CD4-positive, alpha-beta memory T cell (primary cell): ENCODE measurements at regions of chr6 and their contacts with region 1.

Region 1: GRCh38 chr6:7389451-7390225 is at the starts of genes CAGE1 and RIOK1:
- DNase-seq: peak; percentile 94 to 96 (median 96)
- H3K4me3 ChIP-seq: peak within 1 kb of the TSS; percentile 91 to 99
- H3K4me3 Mint-ChIP-seq: peak within 1 kb of the TSS; percentile 92 to 97 (median 94)
- H3K27ac ChIP-seq: peak within 1 kb of the TSS; percentile 94
- H3K27ac Mint-ChIP-seq: peak within 1 kb of the TSS; percentile 97 to 100 (median 100)
- H3K4me1 ChIP-seq: peaks cover 30% of the 10 kb centered on the region
- H3K4me1 Mint-ChIP-seq: peaks cover 32 to 51% (median 42%) of the 10 kb centered on the region in 4 donors
- H3K27me3 ChIP-seq: no peaks in the 10 kb centered on the region
- H3K27me3 Mint-ChIP-seq: no peaks in the 10 kb centered on the region
- total RNA-seq, gene CAGE1: 0.17 to 0.33 TPM
- total RNA-seq, gene RIOK1: 22.4 to 26.1 TPM

Region 2: GRCh38 chr6:6085928-6086668 is 1303.5 kb before region 1 on chr6:
- CTCF ChIA-PET with region 1: no interaction called
- POLR2A ChIA-PET with region 1: no interaction called
- intact Hi-C with region 1: no loop called
- DNase-seq: no peak
- H3K4me3 ChIP-seq: no peak overlapping the region
- H3K4me3 Mint-ChIP-seq: no peak overlapping the region
- H3K27ac ChIP-seq: no peak overlapping the region
- H3K27ac Mint-ChIP-seq: no peak overlapping the region
- H3K4me1 ChIP-seq: no peaks in the 10 kb centered on the region
- H3K4me1 Mint-ChIP-seq: no peaks in the 10 kb centered on the region
- H3K27me3 ChIP-seq: no peaks in the 10 kb centered on the region
- H3K27me3 Mint-ChIP-seq: peaks cover 6 to 14% of the 10 kb centered on the region in 2 donors

Region 3: GRCh38 chr6:7282097-7282906 is 107.3 kb before region 1 on chr6:
- CTCF ChIA-PET with region 1: interaction called, 27 read pairs
- POLR2A ChIA-PET with region 1: no interaction called
- intact Hi-C with region 1: loop called (anchors 2 kb)
- DNase-seq: no peak
- H3K4me3 ChIP-seq: no peak overlapping the region
- H3K4me3 Mint-ChIP-seq: peak overlapping the region; percentile 1 to 71 (median 44)
- H3K27ac ChIP-seq: peak overlapping the region; percentile 8
- H3K27ac Mint-ChIP-seq: peak overlapping the region; percentile 45 to 89 (median 81)
- H3K4me1 ChIP-seq: peaks cover 11% of the 10 kb centered on the region
- H3K4me1 Mint-ChIP-seq: peaks cover 14 to 18% (median 16%) of the 10 kb centered on the region in 4 donors
- H3K27me3 ChIP-seq: no peaks in the 10 kb centered on the region
- H3K27me3 Mint-ChIP-seq: no peaks in the 10 kb centered on the region

Region 4: DNA sequence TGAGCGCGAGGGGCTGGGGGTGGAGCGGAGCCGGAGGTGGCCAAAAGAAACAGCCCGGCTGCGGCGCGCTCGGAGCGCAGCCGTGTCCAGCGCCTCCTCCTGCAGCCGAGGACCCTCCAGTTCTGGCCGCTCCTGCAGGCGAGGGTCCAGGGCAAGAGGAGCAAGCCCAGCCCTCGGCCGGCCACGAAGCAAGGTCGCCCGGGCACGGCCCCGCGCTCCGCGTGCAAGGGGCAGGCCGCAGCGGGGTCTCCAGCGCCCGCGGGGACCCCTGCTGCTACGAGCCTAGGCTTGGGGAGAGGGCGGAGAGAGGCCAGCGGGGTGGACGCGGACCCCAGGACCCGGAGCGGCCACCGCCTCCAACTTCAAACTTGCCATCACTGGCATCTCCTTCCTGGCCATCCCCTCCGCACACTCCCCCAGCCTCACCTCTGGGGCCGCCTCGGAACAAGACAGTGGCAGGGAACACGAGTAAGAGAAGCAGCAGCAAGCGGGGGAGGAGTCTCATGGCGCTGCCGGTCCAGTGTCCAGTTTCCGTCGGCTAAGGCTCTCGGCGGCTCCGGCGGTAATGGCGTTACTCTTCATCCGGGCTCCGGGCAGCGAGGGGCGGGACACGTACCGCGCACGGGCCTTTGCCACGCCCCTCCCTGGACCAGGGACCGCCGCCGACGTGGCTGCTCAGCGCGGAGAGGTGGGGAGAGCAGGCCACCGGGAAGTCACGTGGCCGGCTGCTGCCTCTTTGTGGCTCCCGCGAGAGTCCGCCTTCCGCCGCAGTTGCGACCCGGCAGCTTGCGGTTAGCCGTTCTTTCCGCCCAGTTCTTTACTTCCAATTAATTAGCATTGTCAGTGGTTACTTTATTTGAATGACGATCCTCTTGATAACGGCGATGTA is 76.8 kb before region 1 on chr6 and contains the start of gene SSR1:
- CTCF ChIA-PET with region 1: interaction called, 6 read pairs
- POLR2A ChIA-PET with region 1: interaction called, 37 read pairs
- intact Hi-C with region 1: loop called (anchors 1 kb)
- DNase-seq: peak; percentile 89 to 93 (median 91)
- H3K4me3 ChIP-seq: peak within 1 kb of the TSS; percentile 95 to 97
- H3K4me3 Mint-ChIP-seq: peak within 1 kb of the TSS; percentile 91 to 100 (median 96)
- H3K27ac ChIP-seq: peak within 1 kb of the TSS; percentile 77
- H3K27ac Mint-ChIP-seq: peak within 1 kb of the TSS; percentile 83 to 98 (median 95)
- H3K4me1 ChIP-seq: peaks cover 53% of the 10 kb centered on the region
- H3K4me1 Mint-ChIP-seq: peaks cover 33 to 62% (median 47%) of the 10 kb centered on the region in 4 donors
- H3K27me3 ChIP-seq: no peaks in the 10 kb centered on the region
- H3K27me3 Mint-ChIP-seq: no peaks in the 10 kb centered on the region
- total RNA-seq, gene SSR1: 150 to 158 TPM

Region 5: DNA sequence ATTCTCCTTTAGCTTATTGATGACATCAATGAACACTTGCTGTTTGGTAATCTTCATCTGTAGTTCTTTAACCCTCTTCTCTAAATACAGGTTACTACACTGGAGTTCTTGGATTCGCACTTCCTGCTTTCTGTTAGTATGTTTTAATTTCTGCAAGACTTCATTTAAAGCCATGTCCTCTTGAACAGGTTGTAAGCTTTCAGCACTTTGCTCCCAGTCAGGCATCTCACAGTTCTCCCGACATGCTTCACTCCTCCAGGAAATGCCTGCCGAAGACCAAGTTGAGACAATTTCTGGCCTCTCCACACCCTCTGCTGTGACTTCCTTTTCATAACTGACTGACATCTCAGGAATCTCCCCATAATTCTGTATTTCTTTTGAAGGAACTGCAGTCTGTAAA is 15.9 kb before region 1 on chr6:
- CTCF ChIA-PET with region 1: no interaction called
- POLR2A ChIA-PET with region 1: no interaction called
- intact Hi-C with region 1: no loop called
- DNase-seq: no peak
- H3K4me3 ChIP-seq: no peak overlapping the region
- H3K4me3 Mint-ChIP-seq: peak overlapping the region in 1 of 8 donors; percentile 21
- H3K27ac ChIP-seq: no peak overlapping the region
- H3K27ac Mint-ChIP-seq: no peak overlapping the region
- H3K4me1 ChIP-seq: no peaks in the 10 kb centered on the region
- H3K4me1 Mint-ChIP-seq: no peaks in the 10 kb centered on the region
- H3K27me3 ChIP-seq: no peaks in the 10 kb centered on the region
- H3K27me3 Mint-ChIP-seq: peaks cover 5% of the 10 kb centered on the region in 2 donors

Region 6: GRCh38 chr6:7431674-7432390 is 42.2 kb after region 1 on chr6:
- CTCF ChIA-PET with region 1: no interaction called
- POLR2A ChIA-PET with region 1: no interaction called
- intact Hi-C with region 1: no loop called
- DNase-seq: no peak
- H3K4me3 ChIP-seq: no peak overlapping the region
- H3K4me3 Mint-ChIP-seq: no peak overlapping the region
- H3K27ac ChIP-seq: no peak overlapping the region
- H3K27ac Mint-ChIP-seq: no peak overlapping the region
- H3K4me1 ChIP-seq: no peaks in the 10 kb centered on the region
- H3K4me1 Mint-ChIP-seq: peaks cover 0 to 1% (median 0%) of the 10 kb centered on the region in 4 donors
- H3K27me3 ChIP-seq: no peaks in the 10 kb centered on the region
- H3K27me3 Mint-ChIP-seq: peaks cover 5% of the 10 kb centered on the region in 2 donors